ENCODE measurements at regions of chr18 and their contacts with region 1.

Region 1: GRCh38 chr18:9353596-9353995 is 19.0 kb downstream of the TWSG1 start:
- H3K4me3 Mint-ChIP-seq: no peak overlapping the region
- H3K27ac Mint-ChIP-seq: no peak overlapping the region
- H3K4me1 Mint-ChIP-seq: peaks cover 7% of the 10 kb centered on the region
- H3K27me3 Mint-ChIP-seq: no peaks in the 10 kb centered on the region

Region 2: DNA sequence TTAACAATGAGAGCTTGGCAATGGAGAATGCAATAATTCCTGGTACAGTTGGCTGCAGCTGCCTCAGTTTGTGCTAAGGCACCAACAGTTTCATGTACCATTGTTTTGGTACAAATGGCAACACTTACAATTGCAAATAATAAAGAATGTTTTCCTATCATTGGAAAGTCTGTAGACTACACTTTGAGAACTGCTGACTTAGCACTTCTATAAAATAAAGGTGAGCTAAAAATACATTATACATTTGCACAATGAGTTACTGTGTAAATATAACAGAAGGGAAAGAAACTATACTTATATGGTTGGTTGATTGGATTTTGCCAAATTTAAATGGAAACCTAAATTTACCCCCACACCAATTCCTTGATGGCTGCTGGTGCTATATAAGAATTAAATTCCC is 63.9 kb before region 1 on chr18:
- intact Hi-C with region 1: loop called (anchors 2 kb)
- H3K4me3 Mint-ChIP-seq: no peak overlapping the region
- H3K27ac Mint-ChIP-seq: no peak overlapping the region
- H3K4me1 Mint-ChIP-seq: no peaks in the 10 kb centered on the region
- H3K27me3 Mint-ChIP-seq: no peaks in the 10 kb centered on the region

Region 3: GRCh38 chr18:9433671-9434121 is 80.1 kb after region 1 on chr18:
- intact Hi-C with region 1: no loop called
- H3K4me3 Mint-ChIP-seq: no peak overlapping the region
- H3K27ac Mint-ChIP-seq: peak overlapping the region; percentile 18
- H3K4me1 Mint-ChIP-seq: peaks cover 16% of the 10 kb centered on the region
- H3K27me3 Mint-ChIP-seq: no peaks in the 10 kb centered on the region

Measured in dendritic cell treated with granulocyte-macrophage colony-stimulating factor and Interleukin-4, amounts not matched to agents 40 ng/mL and 50 ng/mL, for 4 days (primary cell).